ENCODE measurements at regions of chr10 and their contacts with region 1.

Region 1: DNA sequence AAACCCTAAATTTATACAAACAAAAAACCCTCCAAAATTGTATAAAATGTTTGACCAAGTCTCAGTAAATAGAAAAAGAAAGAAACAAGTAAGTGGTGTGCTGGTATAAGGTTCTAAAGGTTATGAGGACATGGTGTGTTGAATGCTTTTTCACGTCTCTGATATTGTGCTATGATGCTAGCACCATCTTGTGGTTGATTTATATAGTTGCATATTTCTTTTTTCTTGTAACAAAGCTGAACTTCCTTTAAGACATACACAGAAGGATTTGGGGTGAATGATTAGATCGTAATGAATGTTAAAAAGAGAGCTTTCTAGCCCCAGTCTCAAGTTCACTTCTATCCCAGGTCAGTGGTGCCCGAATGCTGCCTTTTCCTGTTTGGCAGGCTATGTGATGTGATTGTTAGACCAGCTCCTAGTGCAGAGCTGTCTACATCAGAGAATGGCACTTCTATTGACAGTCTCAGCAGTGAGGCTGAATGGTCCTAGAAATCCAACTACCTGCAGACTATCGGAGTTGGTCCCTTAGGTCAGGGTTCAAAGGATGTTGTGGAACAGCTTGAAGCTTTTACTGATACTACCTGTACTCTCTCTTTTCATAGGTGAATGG is 25.0 kb downstream of the VTI1A start:
- DNase-seq: no peak
- H3K4me3 Mint-ChIP-seq: no peak overlapping the region
- H3K27ac Mint-ChIP-seq: no peak overlapping the region
- H3K4me1 Mint-ChIP-seq: peaks cover 4% of the 10 kb centered on the region
- H3K27me3 Mint-ChIP-seq: no peaks in the 10 kb centered on the region

Region 2: GRCh38 chr10:112183329-112184051 is 288.5 kb before region 1 on chr10 and contains the start of gene GPAM:
- CTCF ChIA-PET with region 1: interaction called, 14 read pairs
- POLR2A ChIA-PET with region 1: no interaction called
- intact Hi-C with region 1: loop called (anchors 10 kb)
- DNase-seq: peak; percentile 98
- H3K4me3 Mint-ChIP-seq: peak within 1 kb of the TSS; percentile 88
- H3K27ac Mint-ChIP-seq: peak within 1 kb of the TSS; percentile 81
- H3K4me1 Mint-ChIP-seq: peaks cover 24% of the 10 kb centered on the region
- H3K27me3 Mint-ChIP-seq: no peaks in the 10 kb centered on the region
- total RNA-seq, gene GPAM: 3.3 to 4.7 TPM

Region 3: GRCh38 chr10:112356686-112357085 is 115.3 kb before region 1 on chr10:
- CTCF ChIA-PET with region 1: no interaction called
- POLR2A ChIA-PET with region 1: no interaction called
- intact Hi-C with region 1: no loop called
- DNase-seq: no peak
- H3K4me3 Mint-ChIP-seq: no peak overlapping the region
- H3K27ac Mint-ChIP-seq: no peak overlapping the region
- H3K4me1 Mint-ChIP-seq: no peaks in the 10 kb centered on the region
- H3K27me3 Mint-ChIP-seq: no peaks in the 10 kb centered on the region

Region 4: DNA sequence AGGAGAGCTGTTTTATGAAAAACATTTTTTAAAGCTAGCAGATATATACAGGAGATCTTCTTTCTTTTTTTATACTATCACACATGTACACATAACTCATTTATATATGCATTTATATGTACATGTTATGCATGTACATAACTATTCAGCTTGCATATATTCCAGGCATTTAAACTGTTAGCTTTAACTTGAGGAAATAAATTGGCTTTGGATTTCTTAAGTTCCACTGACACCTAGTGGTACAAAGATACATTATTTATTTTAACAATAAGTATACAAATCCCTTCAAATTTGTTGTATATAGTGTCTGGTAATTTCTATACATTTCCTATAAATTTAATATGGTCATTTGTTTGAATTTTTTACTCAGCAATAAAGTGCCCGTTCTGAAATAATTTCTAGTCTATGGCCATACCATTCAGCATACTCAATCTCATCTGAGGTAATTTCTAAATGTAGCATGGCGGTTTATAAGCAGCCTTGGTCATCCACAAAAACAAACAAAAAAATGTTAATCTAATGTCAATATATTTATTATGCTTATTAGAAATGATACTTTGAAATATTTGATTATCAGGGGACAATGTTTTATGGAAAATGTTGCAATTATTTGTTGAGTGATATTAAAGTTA is 36.9 kb before region 1 on chr10:
- CTCF ChIA-PET with region 1: interaction called, 36 read pairs
- POLR2A ChIA-PET with region 1: no interaction called
- intact Hi-C with region 1: loop called (anchors 1 kb)
- DNase-seq: no peak
- H3K4me3 Mint-ChIP-seq: no peak overlapping the region
- H3K27ac Mint-ChIP-seq: no peak overlapping the region
- H3K4me1 Mint-ChIP-seq: no peaks in the 10 kb centered on the region
- H3K27me3 Mint-ChIP-seq: no peaks in the 10 kb centered on the region

Region 5: GRCh38 chr10:112461029-112461887 is 10.7 kb before region 1 on chr10:
- CTCF ChIA-PET with region 1: interaction called, 25 read pairs
- POLR2A ChIA-PET with region 1: no interaction called
- intact Hi-C with region 1: no loop called
- DNase-seq: peak; percentile 77
- H3K4me3 Mint-ChIP-seq: no peak overlapping the region
- H3K27ac Mint-ChIP-seq: peak overlapping the region; percentile 94
- H3K4me1 Mint-ChIP-seq: peaks cover 24% of the 10 kb centered on the region
- H3K27me3 Mint-ChIP-seq: no peaks in the 10 kb centered on the region

Region 6: GRCh38 chr10:113073549-113074189 is 601.7 kb after region 1 on chr10:
- CTCF ChIA-PET with region 1: no interaction called
- POLR2A ChIA-PET with region 1: no interaction called
- intact Hi-C with region 1: no loop called
- DNase-seq: no peak
- H3K4me3 Mint-ChIP-seq: no peak overlapping the region
- H3K27ac Mint-ChIP-seq: no peak overlapping the region
- H3K4me1 Mint-ChIP-seq: no peaks in the 10 kb centered on the region
- H3K27me3 Mint-ChIP-seq: no peaks in the 10 kb centered on the region

Region 7: DNA sequence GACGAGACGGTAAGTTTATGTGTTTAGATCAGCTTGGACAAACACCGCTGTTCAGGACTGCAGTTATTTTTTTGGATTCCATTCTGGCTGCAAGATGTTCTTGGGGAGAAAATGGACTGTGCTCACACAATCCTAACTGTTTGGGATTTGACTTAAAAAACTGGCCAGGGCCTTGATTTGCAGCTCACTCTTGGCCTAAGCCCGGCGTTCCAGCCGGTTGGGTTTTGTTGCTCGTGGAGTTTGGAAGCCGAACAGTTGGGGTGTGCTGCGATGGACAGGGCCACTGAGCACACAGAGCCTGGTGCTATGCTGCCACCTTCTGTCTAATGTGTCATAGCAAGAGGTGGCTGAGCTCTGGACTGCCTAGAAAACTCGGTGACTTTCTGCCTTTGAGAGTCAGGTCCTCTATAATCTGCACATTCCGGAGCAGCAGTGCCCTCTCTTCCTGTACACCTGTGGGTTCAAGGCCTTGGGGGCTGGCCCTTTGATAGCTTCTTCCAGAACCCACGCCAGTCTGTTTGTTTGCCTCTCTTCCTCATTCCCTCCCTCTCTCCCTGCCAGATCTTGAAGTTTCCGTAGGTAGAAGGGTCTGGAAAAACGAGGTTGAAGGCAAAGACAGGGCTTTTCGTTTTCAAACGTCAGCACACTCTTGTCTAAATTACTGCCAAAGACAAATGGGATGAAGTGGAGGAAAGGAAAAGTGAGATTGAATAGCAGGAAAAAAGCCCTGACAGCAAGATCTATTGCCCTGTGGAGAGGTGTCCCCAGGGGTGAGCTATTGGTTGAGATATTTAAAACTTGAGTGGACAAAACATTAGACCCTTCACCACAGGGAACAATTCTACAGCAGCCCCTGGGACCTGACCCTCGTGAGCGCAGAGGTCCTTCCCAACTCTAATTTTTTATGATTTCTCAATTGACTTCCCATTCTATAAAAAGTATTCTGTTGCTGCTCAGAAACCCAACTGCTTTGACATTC is 913.3 kb after region 1 on chr10:
- CTCF ChIA-PET with region 1: interaction called, 10 read pairs
- POLR2A ChIA-PET with region 1: no interaction called
- intact Hi-C with region 1: no loop called
- DNase-seq: peak; percentile 62
- H3K4me3 Mint-ChIP-seq: no peak overlapping the region
- H3K27ac Mint-ChIP-seq: no peak overlapping the region
- H3K4me1 Mint-ChIP-seq: peaks cover 20% of the 10 kb centered on the region
- H3K27me3 Mint-ChIP-seq: peaks cover 3% of the 10 kb centered on the region